Heart left ventricle (tissue), 16 donors: ENCODE measurements at regions of chr22 and their contacts with region 1.

Region 1: DNA sequence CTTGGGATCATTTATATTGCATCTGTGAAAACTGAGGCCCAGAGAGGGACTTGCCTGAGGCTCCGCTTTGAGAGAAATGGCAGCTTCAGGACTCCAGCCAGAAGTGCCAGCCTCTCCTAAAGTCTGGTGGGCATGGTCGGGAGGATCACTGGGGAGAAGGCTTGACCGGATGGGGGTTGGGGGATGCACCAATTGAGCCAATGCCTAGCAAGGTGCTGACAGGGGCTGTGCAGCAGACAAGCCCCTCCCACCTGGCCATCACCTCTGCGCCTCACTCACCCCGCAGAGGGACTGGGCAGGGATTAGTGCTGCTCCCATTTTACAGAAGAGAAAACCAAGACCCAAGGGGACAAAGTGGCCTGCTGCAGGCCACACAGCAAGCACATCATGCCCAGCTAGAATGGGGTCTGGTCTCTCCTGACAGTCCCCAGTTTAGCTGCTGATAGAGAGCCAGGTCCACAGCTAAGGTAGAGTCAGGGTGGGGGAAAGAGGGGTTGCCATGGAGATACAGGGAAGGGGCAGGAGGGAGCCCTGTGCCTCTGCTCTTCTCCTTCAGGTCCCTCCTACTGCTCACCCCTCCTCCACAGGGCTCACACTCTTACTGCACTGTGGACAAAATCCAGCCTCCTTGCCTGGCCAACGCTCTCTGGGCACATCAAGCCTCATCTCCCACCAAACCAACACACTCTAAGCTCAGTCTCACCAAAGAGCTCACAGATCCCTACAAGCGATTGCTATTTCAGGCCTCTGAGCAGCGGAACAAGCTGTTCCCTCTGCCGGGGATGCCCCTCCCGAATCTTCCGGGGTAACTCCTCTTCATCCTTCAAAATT is 29.5 kb downstream of the TEF start:
- DNase-seq: peak in 2 of 5 donors; percentile 45 to 72
- ATAC-seq: peak; percentile 8 to 34 (median 26)
- H3K4me3 ChIP-seq: no peak overlapping the region
- H3K27ac ChIP-seq: peak overlapping the region; percentile 92 to 100 (median 98)
- H3K4me1 ChIP-seq: peaks cover 0 to 57% (median 42%) of the 10 kb centered on the region in 12 donors
- H3K27me3 ChIP-seq: no peaks in the 10 kb centered on the region
- CTCF ChIP-seq: no peak
- POLR2A ChIP-seq: peak in 1 of 2 donors; percentile 66

Region 2: DNA sequence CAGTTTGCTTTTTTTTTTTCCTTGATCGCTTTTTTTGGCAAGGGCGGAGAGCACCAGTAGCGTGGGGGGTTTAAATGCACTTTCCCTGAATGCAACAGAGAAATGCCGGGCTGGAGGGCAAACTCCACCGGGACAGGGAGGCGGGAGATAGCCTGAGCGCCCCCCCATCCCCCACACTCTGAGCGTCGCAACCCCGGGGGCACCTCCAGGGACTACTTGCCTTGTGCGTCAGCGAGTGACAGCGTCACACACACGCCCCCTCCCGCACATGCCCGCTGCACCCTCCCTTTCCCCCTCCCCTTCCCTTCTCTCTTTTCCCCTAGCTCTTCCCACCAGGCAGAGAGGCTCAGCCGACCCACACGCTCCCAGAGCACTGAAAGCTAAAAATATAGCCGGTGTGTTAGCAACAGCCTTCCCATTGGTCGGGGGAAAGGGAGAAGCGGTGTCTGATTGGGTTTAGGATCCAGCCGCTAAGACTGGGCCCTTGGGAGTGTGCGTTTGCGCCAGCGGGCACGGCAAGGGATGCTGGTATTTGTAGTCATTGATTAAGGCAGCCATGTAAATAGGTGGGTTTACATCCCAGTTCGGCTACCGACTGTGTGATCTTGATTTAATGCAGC is 37.1 kb after region 1 on chr22:
- intact Hi-C with region 1: loop called in 4 of 10 experiments (anchors 2 kb)
- DNase-seq: peak; percentile 95 to 98 (median 97)
- ATAC-seq: peak; percentile 78 to 88 (median 86)
- H3K4me3 ChIP-seq: peak overlapping the region; percentile 76 to 98 (median 94)
- H3K27ac ChIP-seq: peak overlapping the region; percentile 94 to 100 (median 99)
- H3K4me1 ChIP-seq: peaks cover 0 to 19% (median 13%) of the 10 kb centered on the region in 12 donors
- H3K27me3 ChIP-seq: no peaks in the 10 kb centered on the region
- CTCF ChIP-seq: no peak
- POLR2A ChIP-seq: peak in 1 of 2 donors; percentile 90